ENCODE measurements at regions of chr2 and their contacts with region 1.

Region 1: GRCh38 chr2:191386938-191387536 is 141.8 kb downstream of the MYO1B start:
- DNase-seq: no peak

Region 2: GRCh38 chr2:190979906-190980629 is 407.0 kb before region 1 on chr2:
- intact Hi-C with region 1: no loop called
- DNase-seq: peak; percentile 88

Region 3: GRCh38 chr2:191352536-191352935 is 34.5 kb before region 1 on chr2:
- intact Hi-C with region 1: no loop called
- DNase-seq: no peak

Region 4: DNA sequence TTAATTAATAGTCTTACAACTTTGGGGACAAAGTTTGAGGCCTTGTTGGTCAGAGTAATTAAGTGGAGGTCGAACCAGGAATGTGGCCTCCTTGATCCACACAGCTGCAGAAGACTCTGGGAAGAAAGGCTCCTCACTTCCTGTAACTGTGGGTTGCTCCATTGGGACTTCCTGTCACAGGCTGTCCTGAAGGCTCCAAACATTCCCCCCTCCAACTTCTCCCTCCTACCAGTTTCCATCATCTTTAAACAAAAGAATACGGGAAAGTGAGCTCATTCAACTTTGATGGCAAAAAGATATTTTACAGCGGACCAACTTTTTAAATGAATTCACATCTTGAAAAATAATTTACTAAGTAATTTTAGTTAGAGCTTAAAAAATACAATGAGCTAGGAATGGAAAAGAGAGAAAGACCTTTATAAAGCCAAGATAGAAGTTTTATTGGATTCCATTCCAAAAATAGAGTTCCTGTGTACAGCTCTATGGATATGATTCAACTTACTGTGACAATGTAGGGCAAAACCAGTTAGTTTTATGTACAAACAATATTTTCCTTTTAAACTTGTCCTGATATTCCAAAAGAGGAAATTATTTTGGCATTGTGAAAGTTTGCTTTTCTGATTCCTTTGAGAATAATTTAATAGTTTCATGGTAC is 78.9 kb after region 1 on chr2:
- intact Hi-C with region 1: no loop called
- DNase-seq: no peak

Region 5: DNA sequence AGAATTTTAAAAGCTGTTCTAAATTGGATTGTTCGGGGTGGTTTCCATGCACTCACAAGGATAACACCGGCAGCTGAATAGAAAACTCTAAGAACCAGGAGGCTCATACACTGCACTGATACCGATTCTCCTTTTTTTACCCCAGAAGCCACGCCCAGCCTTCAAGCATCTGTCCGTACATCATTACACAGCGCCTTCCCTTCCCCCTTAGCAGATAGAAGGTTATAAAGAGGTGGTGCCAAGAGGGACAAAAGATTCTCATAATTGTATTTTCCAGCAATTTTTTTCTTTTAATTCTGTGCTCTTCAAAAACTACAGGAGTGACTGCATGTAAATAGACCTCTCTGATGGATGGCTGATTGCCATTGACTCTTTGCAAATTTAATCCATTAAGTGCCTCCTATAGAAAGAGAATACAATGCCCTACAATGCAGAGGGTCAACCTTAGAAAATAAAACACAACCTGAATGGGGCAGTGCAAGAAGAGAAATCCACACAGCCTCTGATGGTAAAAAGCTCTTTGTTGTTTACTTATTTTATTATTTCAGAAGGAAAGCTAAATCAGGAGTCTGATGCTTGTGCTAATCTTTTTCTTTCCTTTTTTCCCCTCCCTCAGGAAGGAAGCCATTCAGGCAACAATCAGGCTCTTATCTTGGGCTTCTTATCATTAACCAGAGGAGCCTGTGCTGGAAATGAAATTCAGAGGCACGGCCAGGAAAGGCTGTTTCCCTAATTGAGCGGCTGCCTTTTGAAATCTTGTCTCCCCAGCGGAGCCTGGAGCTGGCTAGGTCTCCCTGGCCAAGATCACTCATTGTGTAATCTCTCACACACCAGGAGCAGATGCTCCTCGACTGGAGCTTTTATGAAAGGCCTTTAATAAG is 92.0 kb after region 1 on chr2:
- intact Hi-C with region 1: loop called (anchors 5 kb)
- DNase-seq: peak; percentile 79

Region 6: GRCh38 chr2:191617575-191617974 is 230.5 kb after region 1 on chr2:
- intact Hi-C with region 1: no loop called
- DNase-seq: no peak